ENCODE measurements at regions of chr7 and their contacts with region 1.

Region 1: DNA sequence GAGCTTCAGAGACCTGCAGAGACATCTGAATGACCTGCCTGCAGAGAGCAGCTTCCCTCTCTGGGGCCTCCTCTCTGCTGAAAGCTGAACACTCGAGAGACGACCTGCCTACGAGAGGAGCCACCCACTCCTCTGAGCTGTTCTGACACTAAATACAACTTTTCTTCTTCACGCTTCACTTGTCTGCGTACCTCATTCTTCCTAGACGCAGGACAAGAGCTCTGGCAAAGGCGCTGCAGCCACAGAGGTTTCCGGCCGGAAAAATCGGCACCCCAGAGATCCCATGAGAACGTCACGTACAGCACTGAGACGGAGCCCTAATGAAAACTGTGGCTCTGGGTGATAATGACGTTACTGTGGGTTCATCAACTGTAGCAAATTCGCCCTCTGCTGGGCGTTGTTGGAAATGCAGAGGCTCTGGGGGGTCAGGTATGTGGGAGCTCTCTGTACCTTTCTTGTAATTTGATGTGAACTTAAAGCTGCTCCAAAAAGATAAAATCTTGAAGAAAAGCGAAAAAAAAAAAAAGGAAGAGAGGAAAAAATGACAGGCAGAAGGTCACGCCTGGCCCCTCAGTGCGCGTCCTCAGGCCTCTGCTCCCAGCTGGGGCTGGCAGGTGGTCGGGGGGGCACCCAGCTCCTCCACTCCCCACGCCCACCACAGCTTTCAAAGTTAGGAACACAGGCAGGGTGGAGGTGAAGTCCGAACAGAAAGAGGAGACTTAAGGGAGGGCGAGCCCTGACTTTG is 120.7 kb downstream of the DYNC2I1 start:
- DNase-seq: peak; percentile 95
- H3K4me3 Mint-ChIP-seq: peak overlapping the region; percentile 77
- H3K27ac Mint-ChIP-seq: peak overlapping the region; percentile 69
- H3K4me1 Mint-ChIP-seq: peaks cover 22% of the 10 kb centered on the region
- H3K27me3 Mint-ChIP-seq: no peaks in the 10 kb centered on the region

Region 2: DNA sequence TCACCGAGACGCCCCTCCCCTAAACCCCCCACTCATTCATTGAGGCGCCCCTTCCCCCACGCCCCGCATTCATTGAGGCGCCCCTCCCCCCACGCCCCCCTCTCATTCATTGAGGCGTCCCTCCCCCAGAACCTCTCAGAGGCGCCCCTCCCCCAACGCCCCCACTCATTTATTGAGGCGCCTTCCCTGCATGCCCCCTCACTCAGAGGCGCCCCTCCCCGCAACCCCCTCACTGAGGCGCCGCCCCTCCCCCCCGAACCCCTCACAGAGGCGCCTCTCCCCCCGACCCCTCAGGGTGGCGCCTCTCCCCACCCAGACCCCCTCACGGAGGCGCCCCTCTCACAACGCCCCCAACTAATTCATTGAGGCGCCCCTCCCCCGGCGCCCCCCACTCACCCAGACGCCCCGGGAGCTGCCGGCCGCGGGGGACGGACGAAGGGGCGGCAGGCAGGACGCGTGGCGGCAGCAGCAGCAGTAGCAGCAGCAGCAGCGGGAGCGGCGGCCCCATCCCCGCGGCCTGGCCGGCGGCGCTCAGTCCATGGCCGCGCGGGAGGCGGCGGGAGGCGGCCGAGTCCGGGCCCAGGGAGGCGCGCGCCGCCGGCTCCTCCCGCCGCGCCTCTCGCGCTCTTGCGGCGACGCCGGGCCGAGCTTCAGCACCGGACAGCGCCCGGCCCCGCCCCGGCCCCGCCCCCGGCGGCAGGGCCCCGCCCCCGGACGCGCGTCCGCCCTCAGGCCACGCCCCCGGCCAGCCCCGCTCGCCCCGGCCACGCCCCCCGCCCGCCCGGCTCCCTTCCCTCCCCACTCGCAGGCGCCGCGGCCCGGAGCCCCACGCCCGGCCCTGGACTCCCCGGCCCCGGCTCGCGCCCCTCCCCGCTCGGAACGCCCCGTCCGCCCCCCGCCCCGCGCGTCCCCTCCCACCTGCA is 389.6 kb before region 1 on chr7 and contains the start of gene PTPRN2:
- CTCF ChIA-PET with region 1: interaction called, 4 read pairs
- intact Hi-C with region 1: loop called (anchors 1 kb)
- DNase-seq: peak; percentile 60
- H3K4me3 Mint-ChIP-seq: no peak within 1 kb of the TSS
- H3K27ac Mint-ChIP-seq: no peak within 1 kb of the TSS
- H3K4me1 Mint-ChIP-seq: peaks cover 11% of the 10 kb centered on the region
- H3K27me3 Mint-ChIP-seq: peaks cover 49% of the 10 kb centered on the region
- total RNA-seq, gene PTPRN2: 0.54 to 0.62 TPM

Region 3: GRCh38 chr7:158704704-158705468 is 272.1 kb before region 1 on chr7 and contains the start of gene NCAPG2:
- CTCF ChIA-PET with region 1: interaction called, 8 read pairs
- intact Hi-C with region 1: loop called (anchors 2 kb)
- DNase-seq: peak; percentile 98
- H3K4me3 Mint-ChIP-seq: peak within 1 kb of the TSS; percentile 82
- H3K27ac Mint-ChIP-seq: peak within 1 kb of the TSS; percentile 85
- H3K4me1 Mint-ChIP-seq: peaks cover 38% of the 10 kb centered on the region
- H3K27me3 Mint-ChIP-seq: no peaks in the 10 kb centered on the region
- total RNA-seq, gene NCAPG2: 145 to 149 TPM

Region 4: DNA sequence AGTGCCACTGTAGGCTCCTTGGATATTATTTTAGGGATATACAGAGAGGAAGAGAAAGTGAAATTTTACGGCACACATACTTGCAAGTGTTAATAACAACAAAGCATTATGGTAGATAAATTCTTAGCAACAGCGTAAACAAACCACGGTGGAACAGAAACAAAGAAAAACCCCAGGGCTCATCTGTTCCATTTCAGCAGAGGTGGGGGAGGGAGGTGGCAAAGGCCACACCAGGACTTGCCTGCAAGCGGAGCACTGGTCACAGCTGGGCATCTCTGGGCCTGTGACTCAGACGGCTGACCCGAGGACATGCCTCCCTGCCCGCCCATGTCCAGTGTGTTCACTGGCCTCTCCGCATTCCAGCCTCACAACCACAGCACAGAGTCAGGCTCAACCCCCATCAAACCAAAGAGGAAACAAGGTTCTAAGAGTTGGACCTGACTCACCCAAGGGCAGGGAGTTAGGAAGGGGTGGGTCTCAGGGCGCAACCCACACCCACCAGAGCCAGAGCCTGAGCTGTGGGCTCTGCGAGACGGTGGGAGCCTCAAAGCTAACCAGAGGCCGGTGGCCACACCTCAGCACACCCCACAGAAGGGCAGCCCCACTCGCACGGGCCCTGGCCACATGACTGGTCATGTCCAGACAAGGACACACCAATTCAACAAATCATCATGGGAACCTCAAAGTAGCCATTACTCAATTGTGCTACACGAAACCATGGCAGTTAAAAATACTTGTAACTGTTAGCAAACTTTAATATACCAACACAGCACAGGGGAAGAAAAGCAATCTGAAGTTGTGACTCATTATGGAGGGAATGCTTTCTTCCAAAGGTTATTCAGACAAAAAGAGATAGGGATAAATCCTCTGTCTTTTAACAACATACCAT is 158.5 kb before region 1 on chr7:
- CTCF ChIA-PET with region 1: interaction called, 4 read pairs
- intact Hi-C with region 1: loop called (anchors 2 kb)
- DNase-seq: peak; percentile 84
- H3K4me3 Mint-ChIP-seq: peak overlapping the region; percentile 81
- H3K27ac Mint-ChIP-seq: peak overlapping the region; percentile 97
- H3K4me1 Mint-ChIP-seq: peaks cover 85% of the 10 kb centered on the region
- H3K27me3 Mint-ChIP-seq: no peaks in the 10 kb centered on the region

Region 5: GRCh38 chr7:158885624-158886023 is 91.4 kb before region 1 on chr7:
- CTCF ChIA-PET with region 1: interaction called, 14 read pairs
- intact Hi-C with region 1: loop called (anchors 1 kb)
- DNase-seq: no peak
- H3K4me3 Mint-ChIP-seq: no peak overlapping the region
- H3K27ac Mint-ChIP-seq: no peak overlapping the region
- H3K4me1 Mint-ChIP-seq: no peaks in the 10 kb centered on the region
- H3K27me3 Mint-ChIP-seq: no peaks in the 10 kb centered on the region

Region 6: GRCh38 chr7:159084069-159084801 is 107.2 kb after region 1 on chr7:
- CTCF ChIA-PET with region 1: no interaction called
- intact Hi-C with region 1: no loop called
- DNase-seq: peak; percentile 12
- H3K4me3 Mint-ChIP-seq: no peak overlapping the region
- H3K27ac Mint-ChIP-seq: no peak overlapping the region
- H3K4me1 Mint-ChIP-seq: peaks cover 2% of the 10 kb centered on the region
- H3K27me3 Mint-ChIP-seq: peaks cover 5% of the 10 kb centered on the region

Region 7: DNA sequence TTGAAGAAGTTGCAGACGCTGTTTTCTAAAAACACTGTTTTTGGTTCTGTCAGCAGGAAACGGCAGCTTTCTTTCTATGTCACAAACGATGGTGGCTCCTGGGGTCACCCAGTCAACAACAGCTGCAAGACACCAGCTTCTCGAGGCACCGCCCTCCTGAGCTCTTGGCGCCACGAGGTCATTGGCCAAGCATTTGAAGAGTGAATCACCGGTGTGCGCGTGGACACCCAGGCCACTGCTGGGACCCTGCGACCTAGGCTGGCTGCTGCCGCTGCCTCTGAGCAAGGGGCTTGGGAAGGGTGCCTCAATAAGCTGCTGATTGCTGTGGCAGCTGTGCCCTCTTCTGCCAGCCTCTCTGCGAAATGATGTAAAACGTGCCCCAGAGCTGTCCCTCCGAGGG is 190.1 kb after region 1 on chr7:
- CTCF ChIA-PET with region 1: no interaction called
- intact Hi-C with region 1: no loop called
- DNase-seq: no peak
- H3K4me3 Mint-ChIP-seq: no peak overlapping the region
- H3K27ac Mint-ChIP-seq: no peak overlapping the region
- H3K4me1 Mint-ChIP-seq: no peaks in the 10 kb centered on the region
- H3K27me3 Mint-ChIP-seq: no peaks in the 10 kb centered on the region